Right ventricle myocardium inferior (tissue), 1 donor: ENCODE measurements at regions of chr1 and their contacts with region 1.

Region 1: DNA sequence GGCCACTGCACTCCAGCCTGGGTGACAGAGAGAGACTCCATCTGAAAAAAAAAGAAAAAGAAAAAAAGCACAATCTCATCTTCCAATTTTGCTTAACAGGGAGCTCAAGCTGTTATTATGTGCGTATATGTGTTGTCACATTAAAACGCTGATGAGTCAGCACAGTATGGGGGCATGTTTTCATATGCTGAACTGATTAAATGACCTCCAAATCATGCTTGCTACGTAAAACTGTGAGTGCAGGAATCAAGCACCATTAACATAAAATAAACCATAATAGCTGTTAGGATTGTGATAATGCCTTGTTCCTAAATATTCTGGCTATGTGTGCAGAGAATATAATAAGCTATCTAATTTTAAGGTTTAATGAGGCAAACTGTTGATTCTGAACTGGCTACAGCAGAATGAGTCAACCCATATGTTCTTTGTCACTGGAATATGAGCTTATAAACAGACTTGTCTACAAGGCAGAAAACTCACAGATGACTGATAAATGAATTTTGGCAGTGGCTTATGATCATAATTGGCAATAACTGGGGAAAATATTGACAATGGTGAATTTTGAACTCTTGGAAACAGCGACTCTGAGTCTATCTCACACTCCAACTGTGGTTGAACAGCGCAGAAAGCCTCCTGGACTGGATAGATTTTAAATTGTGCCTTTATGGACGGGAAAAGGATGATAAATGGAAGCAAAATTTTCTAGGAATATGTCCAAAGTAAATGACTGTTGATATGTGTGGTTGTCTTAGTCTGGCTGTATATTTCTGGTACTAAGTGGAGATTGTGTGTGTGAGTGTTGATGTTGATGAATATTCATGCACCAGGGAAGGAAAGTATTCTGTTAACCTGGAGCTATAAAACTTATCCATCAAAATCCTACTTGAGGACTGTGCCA is 75.5 kb downstream of the VCAM1 start:
- DNase-seq: no peak
- ATAC-seq: peak; percentile 28

Region 2: DNA sequence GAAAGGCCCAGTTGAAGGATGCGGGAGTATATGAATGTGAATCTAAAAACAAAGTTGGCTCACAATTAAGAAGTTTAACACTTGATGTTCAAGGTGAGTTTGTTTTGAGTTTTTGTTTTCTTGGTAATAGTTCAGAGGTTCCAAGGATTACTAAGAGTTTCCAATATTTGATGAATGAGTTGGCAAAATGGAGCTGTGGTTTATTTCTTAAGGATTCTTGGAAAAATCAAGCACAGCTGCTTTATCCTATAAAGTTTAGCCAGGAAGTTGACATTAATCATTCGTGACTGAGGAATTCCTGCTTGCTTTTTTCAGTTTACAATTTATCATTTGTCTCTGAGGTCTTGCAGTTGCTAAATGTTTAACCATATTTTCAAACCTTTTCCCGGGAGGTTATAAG is 60.3 kb before region 1 on chr1:
- intact Hi-C with region 1: loop called (anchors 10 kb)
- DNase-seq: no peak
- ATAC-seq: no peak